Pancreas (tissue), 10 donors: ENCODE measurements at regions of chr17 and their contacts with region 1.

Region 1: GRCh38 chr17:63406689-63407330 is 39.3 kb downstream of the CYB561 start:
- DNase-seq: peak in 3 of 6 donors; percentile 64 to 78 (median 68)
- ATAC-seq: peak; percentile 87 to 97 (median 96)
- H3K4me3 ChIP-seq: no peak overlapping the region
- H3K27ac ChIP-seq: no peak overlapping the region
- H3K4me1 ChIP-seq: no peaks in the 10 kb centered on the region
- H3K27me3 ChIP-seq: no peaks in the 10 kb centered on the region
- CTCF ChIP-seq: peak; percentile 60 to 87 (median 72)

Region 2: GRCh38 chr17:62671583-62672312 is 735.1 kb before region 1 on chr17:
- intact Hi-C with region 1: loop called in 1 of 3 experiments (anchors 10 kb)
- DNase-seq: peak in 2 of 6 donors; percentile 71 to 78
- ATAC-seq: peak in 3 of 4 donors; percentile 21 to 33 (median 28)
- H3K4me3 ChIP-seq: no peak overlapping the region
- H3K27ac ChIP-seq: no peak overlapping the region
- H3K4me1 ChIP-seq: no peaks in the 10 kb centered on the region
- H3K27me3 ChIP-seq: no peaks in the 10 kb centered on the region
- CTCF ChIP-seq: no peak

Region 3: GRCh38 chr17:62703775-62704378 is 702.9 kb before region 1 on chr17:
- intact Hi-C with region 1: loop called in 2 of 3 experiments (anchors 5 kb)
- DNase-seq: peak; percentile 50 to 94 (median 77)
- ATAC-seq: peak; percentile 92 to 97 (median 96)
- H3K4me3 ChIP-seq: peak overlapping the region; percentile 51 to 79 (median 60)
- H3K27ac ChIP-seq: peak overlapping the region in 3 of 4 donors; percentile 24 to 84 (median 39)
- H3K4me1 ChIP-seq: peaks cover 0 to 14% (median 0%) of the 10 kb centered on the region in 3 donors
- H3K27me3 ChIP-seq: no peaks in the 10 kb centered on the region
- CTCF ChIP-seq: peak; percentile 60 to 82 (median 68)

Region 4: DNA sequence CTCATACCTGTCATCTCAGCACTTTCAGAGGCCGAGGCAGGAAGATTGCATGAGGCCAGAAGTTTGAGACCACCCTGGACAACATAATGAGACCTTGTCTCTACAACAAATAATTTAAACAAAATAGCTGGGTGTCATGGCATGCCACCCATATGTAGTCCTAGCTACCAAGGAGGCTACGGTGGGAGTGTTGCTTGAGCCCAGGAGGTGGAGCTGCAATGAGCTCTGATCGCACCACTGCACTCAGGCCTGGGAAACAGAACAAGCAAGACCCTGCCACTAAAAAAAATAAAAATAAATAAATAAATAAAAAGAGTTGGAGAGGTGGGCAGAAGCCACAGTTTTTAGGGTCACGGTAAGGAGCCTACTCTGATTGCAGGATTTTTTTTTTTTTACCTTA is 304.8 kb before region 1 on chr17:
- intact Hi-C with region 1: loop called in 1 of 3 experiments (anchors 10 kb)
- DNase-seq: no peak
- ATAC-seq: no peak
- H3K4me3 ChIP-seq: no peak overlapping the region
- H3K27ac ChIP-seq: no peak overlapping the region
- H3K4me1 ChIP-seq: no peaks in the 10 kb centered on the region
- H3K27me3 ChIP-seq: no peaks in the 10 kb centered on the region
- CTCF ChIP-seq: no peak

Region 5: GRCh38 chr17:63741221-63742049 is 334.6 kb after region 1 on chr17 and contains the start of gene STRADA:
- intact Hi-C with region 1: no loop called
- DNase-seq: peak; percentile 98 to 100 (median 100)
- ATAC-seq: peak; percentile 94 to 98 (median 95)
- H3K4me3 ChIP-seq: peak within 1 kb of the TSS; percentile 61 to 76 (median 66)
- H3K27ac ChIP-seq: peak within 1 kb of the TSS; percentile 86 to 96 (median 88)
- H3K4me1 ChIP-seq: peaks cover 4 to 7% (median 6%) of the 10 kb centered on the region in 3 donors
- H3K27me3 ChIP-seq: no peaks in the 10 kb centered on the region
- CTCF ChIP-seq: no peak
- total RNA-seq, gene STRADA: 8.3 to 15.4 (median 12.1) TPM